ENCODE measurements at regions of chr14 and their contacts with region 1.

Region 1: DNA sequence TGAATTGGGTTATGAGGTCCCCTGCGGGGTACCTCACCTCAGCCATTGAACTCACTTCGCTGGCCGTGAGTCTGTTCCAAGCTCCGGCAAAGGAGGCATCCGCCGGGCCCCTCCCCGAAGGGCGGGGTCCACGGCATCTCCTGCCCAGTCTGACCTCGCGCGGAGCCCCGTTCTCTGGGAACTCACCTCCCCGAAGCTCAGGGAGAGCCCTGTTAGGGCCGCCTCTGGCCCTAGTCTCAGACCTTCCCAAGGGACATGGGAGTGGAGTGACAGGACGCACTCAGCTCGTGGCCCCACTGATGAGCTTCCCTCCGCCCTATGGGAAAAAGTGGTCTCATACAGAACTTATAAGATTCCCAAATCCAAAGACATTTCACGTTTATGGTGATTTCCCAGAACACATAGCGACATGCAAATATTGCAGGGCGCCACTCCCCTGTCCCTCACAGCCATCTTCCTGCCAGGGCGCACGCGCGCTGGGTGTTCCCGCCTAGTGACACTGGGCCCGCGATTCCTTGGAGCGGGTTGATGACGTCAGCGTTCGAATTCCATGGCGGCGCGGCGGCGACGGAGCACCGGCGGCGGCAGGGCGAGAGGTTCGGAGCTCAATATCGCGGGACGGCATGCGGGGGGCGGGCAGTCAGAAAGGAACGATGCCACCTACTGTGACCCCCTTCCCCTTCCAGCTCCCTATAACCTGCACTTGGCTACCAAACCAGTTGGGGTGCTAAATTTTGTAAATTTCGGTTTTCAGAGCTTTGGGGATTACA is at the start of gene PARP2:
- DNase-seq: peak; percentile 85 to 97 (median 89)
- ATAC-seq: peak; percentile 96
- H3K4me3 ChIP-seq: peak within 1 kb of the TSS; percentile 68
- H3K27ac ChIP-seq: peak within 1 kb of the TSS; percentile 90
- H3K4me1 ChIP-seq: peaks cover 0 to 4% of the 10 kb centered on the region in 2 experiments; a peak in 2 of 5 replicates
- H3K27me3 ChIP-seq: no peaks in the 10 kb centered on the region
- CTCF ChIP-seq: no peak
- EP300 ChIP-seq: no peak; the same call in 1 of the 2 replicates
- POLR2A ChIP-seq: peak; percentile 97
- RAD21 ChIP-seq: no peak
- polyA plus RNA-seq, gene PARP2: 25.2 to 34.6 TPM

Region 2: GRCh38 chr14:20327005-20327869 is 16.0 kb before region 1 on chr14:
- CTCF ChIA-PET with region 1: interaction called, 4 read pairs
- POLR2A ChIA-PET with region 1: interaction called, 10 read pairs
- in situ Hi-C with region 1: no loop called
- intact Hi-C with region 1: loop called (anchors 1 kb)
- DNase-seq: peak in 2 of 4 experiments; percentile 27 to 72
- ATAC-seq: peak; percentile 34; the same call in 2 of the 3 replicates
- H3K4me3 ChIP-seq: no peak overlapping the region
- H3K27ac ChIP-seq: no peak overlapping the region
- H3K4me1 ChIP-seq: peaks cover 0 to 14% of the 10 kb centered on the region in 2 experiments; a peak in 2 of 5 replicates
- H3K27me3 ChIP-seq: no peaks in the 10 kb centered on the region
- CTCF ChIP-seq: peak; percentile 40 to 75 (median 47); a peak in 4 of 6 replicates
- EP300 ChIP-seq: no peak
- POLR2A ChIP-seq: no peak
- RAD21 ChIP-seq: peak; percentile 64 to 74

Region 3: GRCh38 chr14:20356422-20356821 is 13.1 kb after region 1 on chr14:
- CTCF ChIA-PET with region 1: no interaction called
- POLR2A ChIA-PET with region 1: interaction called, 19 read pairs
- in situ Hi-C with region 1: no loop called
- intact Hi-C with region 1: no loop called
- DNase-seq: no peak
- ATAC-seq: no peak
- H3K4me3 ChIP-seq: no peak overlapping the region
- H3K27ac ChIP-seq: no peak overlapping the region
- H3K4me1 ChIP-seq: no peaks in the 10 kb centered on the region
- H3K27me3 ChIP-seq: no peaks in the 10 kb centered on the region
- CTCF ChIP-seq: no peak
- EP300 ChIP-seq: no peak
- POLR2A ChIP-seq: no peak
- RAD21 ChIP-seq: no peak

Region 4: DNA sequence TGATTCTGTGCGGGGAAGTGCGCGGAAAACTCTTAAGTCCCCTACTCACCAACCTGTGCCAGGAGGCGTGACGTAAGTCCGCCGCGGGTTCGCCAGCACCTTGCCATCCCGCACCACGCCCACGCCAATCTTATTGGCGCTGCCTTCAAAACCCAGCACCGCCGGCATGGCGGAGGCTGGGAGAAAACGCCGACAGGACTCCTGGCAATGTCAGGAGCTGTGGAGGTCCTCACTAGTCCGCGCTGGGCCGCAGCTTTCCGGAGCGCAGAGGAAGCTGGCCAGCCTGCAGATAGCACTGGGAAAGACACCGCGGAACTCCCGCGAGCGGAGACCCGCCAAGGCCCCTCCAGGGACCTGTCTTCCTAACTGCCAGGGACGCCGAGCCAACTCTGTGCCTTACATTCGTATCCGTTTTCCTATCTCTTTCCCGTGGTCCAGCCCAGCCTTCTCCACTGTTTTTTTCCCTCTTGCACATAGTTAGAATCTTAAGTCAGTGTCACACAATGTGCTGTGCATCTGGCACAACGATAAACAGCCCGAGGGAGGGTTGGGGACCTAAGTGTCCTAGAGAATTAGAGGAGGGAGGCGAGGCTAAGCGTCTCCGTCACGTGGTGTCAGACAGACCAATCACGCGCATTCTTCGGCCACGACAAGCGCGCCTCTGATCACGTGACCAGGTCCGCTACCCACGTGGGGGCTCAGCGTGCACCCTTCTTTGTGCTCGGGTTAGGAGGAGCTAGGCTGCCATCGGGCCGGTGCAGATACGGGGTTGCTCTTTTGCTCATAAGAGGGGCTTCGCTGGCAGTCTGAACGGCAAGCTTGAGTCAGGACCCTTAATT is 111.5 kb after region 1 on chr14 and contains the starts of genes APEX1 and OSGEP:
- CTCF ChIA-PET with region 1: no interaction called
- POLR2A ChIA-PET with region 1: interaction called, 13 read pairs
- in situ Hi-C with region 1: no loop called
- intact Hi-C with region 1: no loop called
- DNase-seq: peak; percentile 92 to 98 (median 96)
- ATAC-seq: peak; percentile 90
- H3K4me3 ChIP-seq: peak within 1 kb of the TSS; percentile 78
- H3K27ac ChIP-seq: peak within 1 kb of the TSS; percentile 99
- H3K4me1 ChIP-seq: peaks cover 15 to 18% of the 10 kb centered on the region in 2 experiments; a peak in 4 of 5 replicates
- H3K27me3 ChIP-seq: no peaks in the 10 kb centered on the region
- CTCF ChIP-seq: peak in 1 of 3 experiments; percentile 10; a peak in 1 of 6 replicates
- EP300 ChIP-seq: no peak
- POLR2A ChIP-seq: peak; percentile 87
- RAD21 ChIP-seq: no peak
- polyA plus RNA-seq, gene APEX1: 158 to 234 TPM
- polyA plus RNA-seq, gene OSGEP: 32.1 to 59.2 TPM

Region 5: DNA sequence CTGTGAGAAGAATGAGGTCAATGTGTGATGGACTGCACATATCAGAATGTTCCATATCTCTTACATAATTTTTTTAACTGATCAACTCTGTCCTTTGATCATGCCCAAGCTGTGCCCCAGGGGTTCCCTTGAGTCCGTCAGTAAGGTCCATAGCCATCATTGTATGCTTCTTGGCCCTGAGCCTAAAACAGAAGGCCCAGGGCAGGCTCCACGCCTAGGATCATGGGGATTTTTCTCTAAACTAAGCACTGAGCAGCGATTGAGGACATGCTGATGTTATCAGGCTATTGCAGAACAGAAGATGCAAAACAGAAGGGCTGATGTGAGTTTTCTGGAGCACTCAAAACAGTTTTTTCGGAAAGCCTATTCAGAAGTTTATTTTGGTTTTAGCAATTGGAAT is 196.6 kb after region 1 on chr14:
- CTCF ChIA-PET with region 1: no interaction called
- POLR2A ChIA-PET with region 1: no interaction called
- in situ Hi-C with region 1: no loop called
- intact Hi-C with region 1: no loop called
- DNase-seq: no peak
- ATAC-seq: no peak
- H3K4me3 ChIP-seq: no peak overlapping the region
- H3K27ac ChIP-seq: no peak overlapping the region
- H3K4me1 ChIP-seq: no peaks in the 10 kb centered on the region
- H3K27me3 ChIP-seq: no peaks in the 10 kb centered on the region
- CTCF ChIP-seq: no peak
- EP300 ChIP-seq: no peak
- POLR2A ChIP-seq: no peak
- RAD21 ChIP-seq: no peak

Region 6: DNA sequence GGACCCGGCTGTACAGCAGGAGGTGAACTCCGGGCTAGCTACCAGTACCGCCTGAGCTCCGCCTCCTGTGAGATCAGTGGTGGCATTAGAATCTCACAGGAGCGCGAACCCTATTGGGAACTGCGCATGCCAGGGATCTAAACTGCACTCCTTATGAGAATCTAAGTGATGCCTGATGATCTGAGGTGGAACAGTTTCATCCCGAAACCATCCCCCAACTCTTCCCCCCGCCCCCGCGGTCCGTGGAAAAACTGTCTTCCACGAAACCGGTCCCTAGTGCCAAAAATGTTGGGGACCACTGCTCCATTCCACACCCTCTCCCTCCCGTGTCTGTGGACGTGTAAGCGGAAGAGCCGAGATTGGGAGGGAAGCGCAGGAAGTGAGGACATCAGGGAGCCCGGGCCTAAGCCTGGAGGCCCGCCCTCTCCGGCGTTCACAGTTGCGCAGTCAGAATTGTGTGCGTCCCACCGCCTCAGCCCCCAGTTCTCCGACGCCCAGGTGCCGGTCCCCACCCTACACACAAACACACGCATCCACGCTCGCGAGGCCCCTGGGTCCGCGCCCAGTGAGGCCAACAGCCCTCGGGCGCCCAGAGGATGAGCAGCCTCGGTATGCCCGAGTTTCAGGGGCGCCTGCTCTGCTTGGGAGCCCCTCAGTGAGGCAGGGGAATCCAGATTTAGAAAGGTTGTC is 339.3 kb after region 1 on chr14:
- CTCF ChIA-PET with region 1: no interaction called
- POLR2A ChIA-PET with region 1: no interaction called
- in situ Hi-C with region 1: no loop called
- intact Hi-C with region 1: loop called (anchors 5 kb)
- DNase-seq: peak; percentile 37 to 83 (median 54)
- ATAC-seq: peak; percentile 83
- H3K4me3 ChIP-seq: peak overlapping the region; percentile 75
- H3K27ac ChIP-seq: peak overlapping the region; percentile 62; the same call in 2 of the 3 replicates
- H3K4me1 ChIP-seq: peaks cover 10 to 13% of the 10 kb centered on the region in 2 experiments; a peak in 3 of 5 replicates
- H3K27me3 ChIP-seq: no peaks in the 10 kb centered on the region
- CTCF ChIP-seq: no peak
- EP300 ChIP-seq: no peak
- POLR2A ChIP-seq: peak; percentile 50; the same call in 1 of the 2 replicates
- RAD21 ChIP-seq: no peak

Region 7: GRCh38 chr14:20732979-20733635 is 389.8 kb after region 1 on chr14:
- CTCF ChIA-PET with region 1: no interaction called
- POLR2A ChIA-PET with region 1: no interaction called
- in situ Hi-C with region 1: no loop called
- intact Hi-C with region 1: no loop called
- DNase-seq: no peak
- ATAC-seq: no peak
- H3K4me3 ChIP-seq: no peak overlapping the region
- H3K27ac ChIP-seq: no peak overlapping the region
- H3K4me1 ChIP-seq: peaks cover 0 to 3% of the 10 kb centered on the region in 2 experiments; a peak in 2 of 5 replicates
- H3K27me3 ChIP-seq: peaks cover 3 to 5% of the 10 kb centered on the region in 2 experiments; a peak in 3 of 5 replicates
- CTCF ChIP-seq: no peak
- EP300 ChIP-seq: no peak
- POLR2A ChIP-seq: no peak
- RAD21 ChIP-seq: no peak

Measured in K562 (cell line).